AG04450 (cell line): ENCODE measurements at regions of chr10 and their contacts with region 1.

Region 1: DNA sequence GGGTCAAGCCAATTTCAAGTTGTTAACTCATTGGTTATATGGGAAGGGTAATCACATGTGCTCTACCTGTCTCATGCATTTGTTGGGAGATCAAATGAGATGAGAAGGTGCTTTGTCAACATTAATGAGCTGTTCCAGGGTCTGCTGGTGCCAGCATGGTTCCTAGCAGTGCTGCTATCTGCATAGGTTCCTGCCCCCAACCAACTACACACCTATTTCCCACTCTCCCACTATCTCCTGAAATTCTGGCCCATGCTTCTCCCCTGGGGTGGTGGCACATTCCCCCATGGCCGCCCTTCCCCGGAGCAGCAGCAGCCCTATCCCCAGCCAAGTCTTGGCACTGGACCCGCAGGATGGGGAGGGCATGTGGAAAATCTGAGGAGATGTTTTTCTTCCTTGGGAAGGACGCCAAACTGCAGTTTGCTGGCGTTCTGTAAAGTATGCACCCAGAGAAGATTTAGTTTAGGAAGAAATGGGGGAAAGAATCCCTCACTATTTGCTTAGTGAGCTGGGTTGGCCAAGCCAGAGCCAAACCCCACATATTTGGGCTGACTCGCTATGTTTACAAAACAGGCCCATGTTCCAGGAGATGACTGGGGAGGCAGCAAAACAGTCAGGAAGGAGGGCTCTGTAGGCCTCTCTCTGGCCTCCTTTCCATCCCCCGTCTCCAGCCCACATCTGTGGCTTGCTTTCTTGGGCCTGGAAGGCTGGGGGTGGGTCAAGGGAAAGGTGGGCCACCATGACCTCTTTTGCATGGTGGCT is 42.5 kb downstream of the PPP1R3C start:
- DNase-seq: peak; percentile 84
- H3K4me3 ChIP-seq: no peak overlapping the region
- H3K27ac ChIP-seq: peak overlapping the region; percentile 98
- H3K27me3 ChIP-seq: no peaks in the 10 kb centered on the region
- CTCF ChIP-seq: no peak

Region 2: GRCh38 chr10:91579329-91579985 is 10.9 kb before region 1 on chr10:
- CTCF ChIA-PET with region 1: no interaction called
- POLR2A ChIA-PET with region 1: interaction called, 15 read pairs
- DNase-seq: no peak
- H3K4me3 ChIP-seq: no peak overlapping the region
- H3K27ac ChIP-seq: no peak overlapping the region
- H3K27me3 ChIP-seq: no peaks in the 10 kb centered on the region
- CTCF ChIP-seq: no peak

Region 3: GRCh38 chr10:91604553-91605534 is 14.5 kb after region 1 on chr10:
- CTCF ChIA-PET with region 1: interaction called, 3 read pairs
- POLR2A ChIA-PET with region 1: interaction called, 10 read pairs
- DNase-seq: no peak
- H3K4me3 ChIP-seq: no peak overlapping the region
- H3K27ac ChIP-seq: peak overlapping the region; percentile 4
- H3K27me3 ChIP-seq: no peaks in the 10 kb centered on the region
- CTCF ChIP-seq: peak; percentile 31; the same call in 1 of the 2 replicates

Region 4: GRCh38 chr10:91613411-91614253 is 23.3 kb after region 1 on chr10:
- CTCF ChIA-PET with region 1: no interaction called
- POLR2A ChIA-PET with region 1: interaction called, 23 read pairs
- DNase-seq: peak; percentile 89
- H3K4me3 ChIP-seq: no peak overlapping the region
- H3K27ac ChIP-seq: peak overlapping the region; percentile 96
- H3K27me3 ChIP-seq: no peaks in the 10 kb centered on the region
- CTCF ChIP-seq: no peak

Region 5: DNA sequence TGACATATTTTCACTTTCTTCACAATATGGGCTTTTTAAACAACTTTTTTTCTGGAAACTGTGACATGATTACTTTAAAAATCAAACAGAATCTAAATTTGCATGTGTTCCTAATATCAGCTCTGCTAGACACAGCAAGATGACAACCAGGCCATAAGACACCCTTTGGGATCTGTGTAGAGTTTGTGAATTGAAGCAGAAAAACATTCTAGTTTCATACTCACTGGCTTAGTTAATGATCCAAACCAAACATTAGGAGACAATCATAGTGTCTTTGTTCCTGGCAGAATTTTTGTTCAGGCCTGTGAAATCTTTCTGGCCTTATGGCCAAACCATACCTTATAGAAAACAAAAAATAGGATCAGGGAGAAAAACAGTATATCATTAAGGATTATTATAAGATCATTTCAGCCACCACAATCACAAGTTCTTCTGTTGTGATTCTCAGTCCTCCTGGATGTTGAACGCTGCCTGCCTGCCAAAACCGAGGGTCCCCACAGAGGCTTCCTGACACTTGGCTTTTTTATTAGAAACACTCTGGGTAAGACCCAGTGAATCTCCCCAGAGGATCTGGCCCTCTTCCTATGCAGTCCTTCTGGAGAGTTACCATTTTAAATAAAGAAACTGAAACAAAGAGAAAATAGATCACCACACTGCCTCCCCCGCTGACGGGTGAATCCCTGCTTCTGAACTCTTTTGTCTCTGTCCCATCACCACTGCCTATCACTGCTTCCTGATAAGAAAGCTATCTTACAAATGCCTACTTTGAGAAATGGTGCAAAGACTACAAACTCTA is 121.8 kb after region 1 on chr10:
- CTCF ChIA-PET with region 1: no interaction called
- POLR2A ChIA-PET with region 1: no interaction called
- DNase-seq: no peak
- H3K4me3 ChIP-seq: no peak overlapping the region; the same call in 1 of the 2 replicates
- H3K27ac ChIP-seq: no peak overlapping the region
- H3K27me3 ChIP-seq: no peaks in the 10 kb centered on the region
- CTCF ChIP-seq: no peak

Region 6: DNA sequence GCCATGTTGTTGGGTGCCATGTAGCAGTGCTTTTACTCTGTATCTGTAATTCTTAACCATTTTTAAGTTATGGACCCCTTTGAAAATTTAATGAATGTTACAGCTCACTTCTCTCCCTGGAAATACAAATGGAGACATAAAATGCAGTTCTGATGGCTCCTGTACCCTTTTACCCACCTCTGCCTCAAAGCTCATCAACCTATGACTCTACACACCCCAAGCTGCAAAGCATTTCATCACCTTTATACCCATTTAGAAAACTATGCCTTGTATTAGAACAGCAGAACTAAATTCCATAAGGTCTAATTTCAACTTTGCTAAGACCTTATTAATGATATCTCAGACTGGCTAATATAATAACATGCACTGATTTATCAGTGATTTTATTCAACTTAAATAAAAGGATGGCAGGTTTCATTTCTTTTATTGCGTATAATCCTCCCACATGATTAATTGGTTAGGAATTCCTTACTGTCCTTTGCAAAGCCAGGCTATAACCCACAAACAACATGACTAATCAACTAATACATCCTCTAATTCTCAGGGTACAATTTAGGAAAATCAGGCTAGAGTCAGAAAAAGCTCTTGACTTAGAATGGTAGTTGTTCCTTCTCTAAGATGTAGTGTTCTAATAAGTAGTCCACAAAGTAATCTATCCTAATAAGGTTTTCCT is 632.4 kb after region 1 on chr10:
- CTCF ChIA-PET with region 1: no interaction called
- POLR2A ChIA-PET with region 1: no interaction called
- DNase-seq: no peak
- H3K4me3 ChIP-seq: no peak overlapping the region
- H3K27ac ChIP-seq: no peak overlapping the region
- H3K27me3 ChIP-seq: no peaks in the 10 kb centered on the region
- CTCF ChIP-seq: no peak